Activated CD4-positive, alpha-beta T cell treated with anti-CD3 and anti-CD28 coated beads for 36 hours (primary cell): ENCODE measurements at regions of chr2 and their contacts with region 1.

Region 1: DNA sequence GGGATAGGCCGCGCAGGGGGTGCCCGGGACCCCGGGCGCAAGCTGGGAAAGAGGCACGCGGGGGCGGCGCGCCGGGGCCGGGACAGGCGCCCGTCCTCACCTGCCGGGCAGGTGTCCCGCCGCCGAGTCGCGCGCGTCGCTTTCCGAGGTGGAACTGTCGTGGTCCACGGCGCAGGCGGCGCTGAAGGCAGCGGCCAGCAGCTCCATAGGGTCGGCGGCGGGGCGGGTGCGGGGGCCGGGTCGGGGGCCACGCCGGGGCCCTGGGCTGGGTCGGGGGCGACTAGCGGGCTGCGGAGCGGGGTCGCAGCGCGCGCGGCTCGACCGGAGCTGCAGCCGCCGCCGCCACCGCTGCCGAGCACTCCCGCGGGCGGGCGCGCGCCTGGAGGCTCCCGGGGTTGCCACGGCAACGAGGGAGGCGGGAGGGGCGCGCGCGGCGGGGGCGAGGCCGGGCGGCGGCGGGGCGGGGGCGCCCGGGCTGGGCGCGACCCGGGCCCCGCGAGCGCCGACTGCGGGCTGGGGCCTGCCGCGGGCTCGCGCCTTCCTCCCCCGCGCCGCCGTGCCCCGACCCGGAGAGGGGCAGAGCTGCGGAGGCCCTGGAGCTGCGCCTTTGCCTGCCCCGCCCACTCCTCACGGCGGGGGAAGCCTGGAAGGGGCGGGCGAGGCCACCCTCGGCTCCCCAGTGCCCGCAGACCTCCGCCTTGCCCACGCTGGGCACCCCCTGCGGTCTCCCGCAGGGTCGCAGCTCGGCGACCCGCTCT is 57.9 kb downstream of the SNORC start:
- DNase-seq: peak; percentile 37
- ATAC-seq: peak; percentile 27
- H3K4me3 Mint-ChIP-seq: no peak overlapping the region
- H3K27ac Mint-ChIP-seq: no peak overlapping the region
- H3K4me1 Mint-ChIP-seq: peaks cover 17% of the 10 kb centered on the region
- H3K27me3 Mint-ChIP-seq: peaks cover 59% of the 10 kb centered on the region

Region 2: GRCh38 chr2:232876078-232876977 is 51.6 kb before region 1 on chr2:
- CTCF ChIA-PET with region 1: no interaction called
- POLR2A ChIA-PET with region 1: no interaction called
- intact Hi-C with region 1: loop called in 1 of 2 experiments (anchors 2 kb)
- DNase-seq: peak; percentile 67
- ATAC-seq: peak; percentile 69
- H3K4me3 Mint-ChIP-seq: peak overlapping the region; percentile 50
- H3K27ac Mint-ChIP-seq: no peak overlapping the region
- H3K4me1 Mint-ChIP-seq: peaks cover 5% of the 10 kb centered on the region
- H3K27me3 Mint-ChIP-seq: peaks cover 7% of the 10 kb centered on the region